ENCODE measurements at regions of chr12 and their contacts with region 1.

Region 1: DNA sequence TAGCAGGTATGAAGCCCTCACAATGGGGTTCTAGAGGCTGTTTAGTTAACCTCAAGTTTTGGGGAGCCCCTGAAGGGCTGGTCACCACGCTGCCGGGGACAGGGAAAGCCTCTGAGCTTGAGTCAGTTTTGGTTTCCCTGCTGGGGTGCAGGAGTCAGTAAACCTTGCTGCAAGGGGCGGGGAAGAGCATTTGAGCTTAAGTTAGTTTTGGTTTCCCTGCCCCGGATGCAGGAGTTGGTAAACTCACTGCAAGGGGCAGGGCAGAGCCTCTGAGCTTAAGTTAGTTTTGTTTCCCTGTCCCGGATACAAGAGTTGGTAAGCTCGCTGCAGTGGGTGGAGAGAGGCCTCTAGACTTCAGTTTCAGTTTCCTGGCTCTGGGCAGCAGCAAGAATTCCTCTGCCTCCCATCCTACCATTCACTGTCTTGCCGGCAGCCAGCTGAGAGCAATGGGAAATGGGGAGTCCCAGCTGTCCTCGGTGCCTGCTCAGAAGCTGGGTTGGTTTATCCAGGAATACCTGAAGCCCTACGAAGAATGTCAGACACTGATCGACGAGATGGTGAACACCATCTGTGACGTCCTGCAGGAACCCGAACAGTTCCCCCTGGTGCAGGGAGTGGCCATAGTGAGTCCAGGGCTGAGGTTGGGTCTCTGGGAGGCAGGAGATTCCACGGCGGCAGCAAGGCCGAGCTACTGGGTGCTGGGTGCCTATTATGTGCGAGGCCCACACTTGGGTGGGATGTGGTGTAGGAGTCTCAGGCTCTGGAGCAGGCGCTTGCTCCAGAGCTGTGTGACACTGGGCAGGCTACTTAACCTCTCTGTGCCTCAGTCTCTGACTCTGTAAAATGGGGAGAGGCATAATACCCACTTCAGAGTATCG is at the start of gene OAS2:
- DNase-seq: peak; percentile 56 to 94 (median 74)
- ATAC-seq: peak; percentile 91
- H3K4me3 ChIP-seq: peak within 1 kb of the TSS; percentile 87
- H3K4me3 Mint-ChIP-seq: peak within 1 kb of the TSS; percentile 100
- H3K27ac ChIP-seq: peak within 1 kb of the TSS; percentile 86 to 90
- H3K27ac Mint-ChIP-seq: peak within 1 kb of the TSS; percentile 99
- H3K4me1 ChIP-seq: peaks cover 26% of the 10 kb centered on the region
- H3K4me1 Mint-ChIP-seq: peaks cover 61% of the 10 kb centered on the region
- H3K27me3 ChIP-seq: no peaks in the 10 kb centered on the region
- H3K27me3 Mint-ChIP-seq: no peaks in the 10 kb centered on the region
- CTCF ChIP-seq: no peak
- total RNA-seq, gene OAS2: 15.0 to 16.2 TPM

Region 2: DNA sequence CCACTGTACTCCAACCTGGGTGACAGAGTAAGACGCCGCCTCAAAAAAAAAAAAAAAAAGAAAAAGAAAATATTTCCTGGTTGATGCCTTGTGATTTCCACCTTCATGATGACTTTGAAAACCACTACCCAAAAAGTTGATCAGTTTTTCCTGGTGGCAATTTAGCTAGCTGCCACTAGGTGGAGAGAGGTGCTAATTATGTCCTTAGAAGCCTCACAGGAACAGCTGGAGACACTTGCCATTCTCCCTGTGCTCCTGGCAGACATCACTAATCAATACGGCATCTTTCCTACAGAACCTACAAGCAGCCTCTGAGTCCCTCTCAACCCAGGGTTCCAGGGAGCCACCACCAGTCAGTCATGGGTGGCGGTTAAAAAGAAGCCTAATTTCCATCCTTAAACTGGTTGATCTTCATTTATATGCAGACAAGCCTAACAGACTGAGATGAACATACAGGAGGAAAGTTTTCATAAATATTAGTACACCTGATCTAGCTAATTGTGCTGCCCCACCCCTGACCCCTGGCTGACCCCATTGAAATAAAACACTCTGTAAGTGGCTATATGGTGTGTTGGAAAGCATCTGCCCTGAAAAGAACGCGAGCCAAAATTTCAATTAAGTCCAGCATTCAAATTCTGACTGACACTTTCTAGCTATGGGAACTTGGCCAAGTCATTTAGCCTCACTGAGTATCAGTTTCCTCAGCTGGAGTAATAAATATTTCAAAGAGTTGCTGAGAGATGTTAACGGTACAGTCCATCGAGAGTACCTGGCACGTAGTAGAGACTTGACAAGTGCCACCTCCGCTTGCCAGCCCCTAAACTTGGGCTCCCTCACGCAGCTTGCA is 77.9 kb before region 1 on chr12:
- CTCF ChIA-PET with region 1: interaction called, 7 read pairs
- POLR2A ChIA-PET with region 1: interaction called, 12 read pairs
- intact Hi-C with region 1: loop called (anchors 2 to 5 kb)
- DNase-seq: peak in 9 of 14 experiments; percentile 9 to 72 (median 42)
- ATAC-seq: peak; percentile 56
- H3K4me3 ChIP-seq: no peak overlapping the region
- H3K4me3 Mint-ChIP-seq: peak overlapping the region; percentile 22
- H3K27ac ChIP-seq: no peak overlapping the region
- H3K27ac Mint-ChIP-seq: peak overlapping the region; percentile 71
- H3K4me1 ChIP-seq: peaks cover 16% of the 10 kb centered on the region
- H3K4me1 Mint-ChIP-seq: peaks cover 44% of the 10 kb centered on the region
- H3K27me3 ChIP-seq: peaks cover 0 to 2% of the 10 kb centered on the region in 2 experiments
- H3K27me3 Mint-ChIP-seq: peaks cover 6% of the 10 kb centered on the region
- CTCF ChIP-seq: peak; percentile 90

Region 3: GRCh38 chr12:112937741-112938719 is 40.4 kb before region 1 on chr12 and contains the start of gene OAS3:
- CTCF ChIA-PET with region 1: no interaction called
- POLR2A ChIA-PET with region 1: interaction called, 50 read pairs
- intact Hi-C with region 1: loop called (anchors 2 to 5 kb)
- DNase-seq: peak; percentile 33 to 92 (median 54)
- ATAC-seq: peak; percentile 66
- H3K4me3 ChIP-seq: peak within 1 kb of the TSS; percentile 82
- H3K4me3 Mint-ChIP-seq: peak within 1 kb of the TSS; percentile 93
- H3K27ac ChIP-seq: peak within 1 kb of the TSS; percentile 57 to 85
- H3K27ac Mint-ChIP-seq: peak within 1 kb of the TSS; percentile 84
- H3K4me1 ChIP-seq: peaks cover 28% of the 10 kb centered on the region
- H3K4me1 Mint-ChIP-seq: peaks cover 31% of the 10 kb centered on the region
- H3K27me3 ChIP-seq: no peaks in the 10 kb centered on the region
- H3K27me3 Mint-ChIP-seq: no peaks in the 10 kb centered on the region
- CTCF ChIP-seq: no peak
- total RNA-seq, gene OAS3: 13.9 to 14.5 TPM

Region 4: GRCh38 chr12:112992541-112993398 is 14.4 kb after region 1 on chr12:
- CTCF ChIA-PET with region 1: interaction called, 25 read pairs
- POLR2A ChIA-PET with region 1: interaction called, 74 read pairs
- intact Hi-C with region 1: no loop called
- DNase-seq: peak; percentile 16 to 76 (median 56)
- ATAC-seq: peak; percentile 87
- H3K4me3 ChIP-seq: no peak overlapping the region
- H3K4me3 Mint-ChIP-seq: no peak overlapping the region
- H3K27ac ChIP-seq: no peak overlapping the region
- H3K27ac Mint-ChIP-seq: peak overlapping the region; percentile 7
- H3K4me1 ChIP-seq: peaks cover 6% of the 10 kb centered on the region
- H3K4me1 Mint-ChIP-seq: peaks cover 25% of the 10 kb centered on the region
- H3K27me3 ChIP-seq: no peaks in the 10 kb centered on the region
- H3K27me3 Mint-ChIP-seq: no peaks in the 10 kb centered on the region
- CTCF ChIP-seq: peak; percentile 74

Region 5: GRCh38 chr12:113358381-113359132 is 380.2 kb after region 1 on chr12 and contains the start of gene PLBD2:
- CTCF ChIA-PET with region 1: no interaction called
- POLR2A ChIA-PET with region 1: no interaction called
- intact Hi-C with region 1: loop called in 1 of 2 experiments (anchors 2 kb)
- DNase-seq: peak; percentile 91 to 98 (median 94)
- ATAC-seq: peak; percentile 92
- H3K4me3 ChIP-seq: peak within 1 kb of the TSS; percentile 85
- H3K4me3 Mint-ChIP-seq: peak within 1 kb of the TSS; percentile 93
- H3K27ac ChIP-seq: peak within 1 kb of the TSS; percentile 67 to 82
- H3K27ac Mint-ChIP-seq: peak within 1 kb of the TSS; percentile 95
- H3K4me1 ChIP-seq: peaks cover 22% of the 10 kb centered on the region
- H3K4me1 Mint-ChIP-seq: peaks cover 24% of the 10 kb centered on the region
- H3K27me3 ChIP-seq: no peaks in the 10 kb centered on the region
- H3K27me3 Mint-ChIP-seq: no peaks in the 10 kb centered on the region
- CTCF ChIP-seq: no peak
- total RNA-seq, gene PLBD2: 10.4 to 12.2 TPM

Measured in CD4-positive, alpha-beta T cell (primary cell).